A549 (cell line): ENCODE measurements at regions of chr9 and their contacts with region 1.

Region 1: GRCh38 chr9:34701769-34702736 is 7.9 kb downstream of the CCL21 start:
- DNase-seq: peak; percentile 78 to 90
- ATAC-seq: peak; percentile 90 to 93
- H3K4me3 ChIP-seq: peak overlapping the region; percentile 57
- H3K27ac ChIP-seq: peak overlapping the region; percentile 51 to 87
- H3K4me1 ChIP-seq: no peaks in the 10 kb centered on the region
- CTCF ChIP-seq: peak; percentile 96
- EP300 ChIP-seq: no peak
- POLR2A ChIP-seq: no peak
- RAD21 ChIP-seq: peak; percentile 72 to 73

Region 2: GRCh38 chr9:34318163-34318790 is 383.8 kb before region 1 on chr9:
- CTCF ChIA-PET with region 1: no interaction called
- POLR2A ChIA-PET with region 1: no interaction called
- DNase-seq: no peak
- ATAC-seq: no peak
- H3K4me3 ChIP-seq: no peak overlapping the region
- H3K27ac ChIP-seq: no peak overlapping the region
- H3K4me1 ChIP-seq: no peaks in the 10 kb centered on the region
- CTCF ChIP-seq: no peak
- EP300 ChIP-seq: no peak
- POLR2A ChIP-seq: no peak
- RAD21 ChIP-seq: no peak

Region 3: DNA sequence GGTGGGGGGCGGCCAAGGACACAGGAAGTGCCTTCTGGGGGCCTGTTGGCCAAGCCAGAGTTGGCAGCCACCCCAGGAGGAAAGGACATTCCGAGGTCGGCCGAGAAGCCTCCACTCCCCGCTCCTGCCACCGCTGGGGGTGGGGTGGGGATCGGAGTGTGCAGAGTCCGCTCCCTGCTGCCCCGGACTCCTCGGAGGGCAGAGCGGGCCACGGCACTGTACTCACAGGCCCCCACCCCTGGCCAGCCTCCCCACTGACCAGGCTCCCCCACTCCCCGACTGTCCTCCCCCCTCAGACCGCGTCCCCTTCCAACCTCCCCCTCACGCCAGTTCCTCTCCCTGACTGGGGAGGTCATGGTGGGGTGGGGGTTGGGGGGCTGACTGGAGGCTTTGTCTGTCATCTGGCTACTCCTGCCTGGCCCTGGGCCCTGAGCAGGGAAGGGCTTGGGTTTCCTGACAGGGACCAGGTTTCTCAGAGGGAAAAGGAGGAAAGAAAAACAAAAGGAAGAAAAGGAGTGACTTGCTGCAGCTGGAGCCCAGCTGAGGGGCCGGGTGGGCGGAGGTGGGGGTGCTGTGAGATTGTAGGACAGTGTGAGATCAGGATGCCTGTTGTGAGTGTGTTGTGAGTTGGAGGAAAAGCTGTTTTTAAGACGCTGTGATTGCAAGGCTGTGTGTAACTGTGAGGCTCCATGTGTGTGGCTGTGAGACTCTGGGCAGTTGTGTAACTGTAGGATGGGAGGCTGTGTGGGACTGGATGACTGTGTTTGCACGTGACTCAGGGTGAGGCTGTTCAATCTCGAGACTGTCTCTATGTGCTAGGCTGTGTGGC is 142.2 kb before region 1 on chr9:
- CTCF ChIA-PET with region 1: no interaction called
- POLR2A ChIA-PET with region 1: no interaction called
- DNase-seq: peak; percentile 27 to 50
- ATAC-seq: peak; percentile 63 to 80; a peak in 5 of 6 replicates
- H3K4me3 ChIP-seq: no peak overlapping the region
- H3K27ac ChIP-seq: peak overlapping the region; percentile 45 to 48; a peak in 4 of 6 replicates
- H3K4me1 ChIP-seq: peaks cover 11% of the 10 kb centered on the region
- CTCF ChIP-seq: no peak
- EP300 ChIP-seq: no peak
- POLR2A ChIP-seq: no peak
- RAD21 ChIP-seq: no peak

Region 4: DNA sequence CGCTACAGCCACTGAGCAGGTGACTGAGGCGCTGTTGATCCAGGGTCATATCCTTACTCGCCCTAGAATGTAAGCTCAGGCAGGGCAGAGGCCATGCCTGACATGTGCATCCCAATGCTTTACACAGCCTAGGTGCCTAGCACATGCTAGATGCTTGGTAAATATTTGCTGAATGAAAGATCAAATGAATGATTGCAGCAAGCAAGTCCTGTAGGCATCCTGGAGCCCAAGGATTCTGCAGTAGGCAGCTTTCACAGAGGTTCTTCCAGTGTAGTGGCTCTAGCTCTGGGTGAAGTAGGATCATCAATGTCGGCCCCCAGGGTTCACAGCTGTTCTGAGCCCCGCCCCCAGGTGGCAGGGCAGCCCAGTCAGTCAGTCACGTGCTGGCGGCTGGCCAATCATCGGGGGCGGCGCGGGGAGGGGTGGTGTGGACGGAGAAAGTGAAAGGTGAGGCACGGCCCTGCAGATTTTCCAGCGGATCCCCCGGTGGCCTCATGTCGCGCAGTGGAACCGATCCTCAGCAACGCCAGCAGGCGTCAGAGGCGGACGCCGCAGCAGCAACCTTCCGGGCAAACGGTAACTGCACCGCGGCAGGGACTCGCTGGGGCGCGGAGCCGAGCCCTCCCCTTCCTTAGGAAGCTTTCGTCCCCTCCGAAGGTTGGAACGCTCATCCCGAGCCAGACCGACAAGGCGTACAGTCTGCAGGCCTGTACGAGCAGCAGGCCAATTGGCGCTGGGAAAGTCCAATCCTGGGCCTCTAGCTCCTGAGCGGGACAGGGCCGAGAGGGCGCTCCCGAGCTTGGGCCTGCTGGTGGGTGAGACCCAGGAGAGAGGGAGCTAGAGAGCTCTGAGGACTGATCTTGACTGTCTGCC is 55.6 kb before region 1 on chr9 and contains the start of gene GALT:
- CTCF ChIA-PET with region 1: interaction called, 18 read pairs
- POLR2A ChIA-PET with region 1: no interaction called
- DNase-seq: peak; percentile 84 to 97
- ATAC-seq: peak; percentile 86 to 91
- H3K4me3 ChIP-seq: peak within 1 kb of the TSS; percentile 60
- H3K27ac ChIP-seq: peak within 1 kb of the TSS; percentile 80 to 94
- H3K4me1 ChIP-seq: peaks cover 32% of the 10 kb centered on the region
- CTCF ChIP-seq: peak; percentile 58
- EP300 ChIP-seq: no peak
- POLR2A ChIP-seq: peak; percentile 61
- RAD21 ChIP-seq: no peak
- polyA plus RNA-seq, gene GALT: 19.0 and 24.4 TPM in 2 replicates

Region 5: DNA sequence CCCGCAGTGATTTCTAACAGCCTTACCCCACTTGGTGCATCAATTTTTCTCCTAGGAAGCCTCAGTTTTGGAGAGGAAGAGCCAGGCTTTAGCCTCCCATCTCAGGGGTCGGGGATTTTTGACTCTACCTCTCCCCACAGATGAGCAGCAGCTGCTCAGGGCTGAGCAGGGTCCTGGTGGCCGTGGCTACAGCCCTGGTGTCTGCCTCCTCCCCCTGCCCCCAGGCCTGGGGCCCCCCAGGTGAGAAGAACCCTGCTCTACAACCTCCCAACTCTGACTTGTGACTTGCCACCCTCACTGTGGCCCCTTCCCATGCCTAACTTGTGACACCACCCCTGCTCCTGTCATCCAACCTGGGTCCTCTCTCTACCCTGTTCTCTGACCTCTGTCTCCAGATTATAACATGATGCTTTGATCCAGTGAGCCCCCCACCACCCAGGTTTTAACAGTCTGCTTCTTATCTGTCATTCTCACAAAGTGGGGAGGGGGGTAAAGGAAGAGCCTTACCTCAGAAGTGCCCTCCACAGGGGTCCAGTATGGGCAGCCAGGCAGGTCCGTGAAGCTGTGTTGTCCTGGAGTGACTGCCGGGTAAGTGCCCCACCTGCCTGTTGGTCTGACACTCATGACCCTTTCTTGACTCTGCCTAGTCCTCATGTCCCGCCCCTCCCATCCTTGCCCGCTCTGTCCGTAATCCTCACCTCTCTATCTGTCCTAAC is 46.8 kb before region 1 on chr9:
- CTCF ChIA-PET with region 1: interaction called, 48 read pairs
- POLR2A ChIA-PET with region 1: no interaction called
- DNase-seq: no peak
- ATAC-seq: no peak
- H3K4me3 ChIP-seq: no peak overlapping the region
- H3K27ac ChIP-seq: no peak overlapping the region
- H3K4me1 ChIP-seq: peaks cover 17% of the 10 kb centered on the region
- CTCF ChIP-seq: no peak
- EP300 ChIP-seq: no peak
- POLR2A ChIP-seq: no peak
- RAD21 ChIP-seq: no peak

Region 6: GRCh38 chr9:34665381-34666250 is 36.4 kb before region 1 on chr9:
- CTCF ChIA-PET with region 1: interaction called, 48 read pairs
- POLR2A ChIA-PET with region 1: interaction called, 3 read pairs
- DNase-seq: peak; percentile 95 to 99
- ATAC-seq: peak; percentile 79 to 86
- H3K4me3 ChIP-seq: peak overlapping the region; percentile 93
- H3K27ac ChIP-seq: peak overlapping the region; percentile 96 to 97
- H3K4me1 ChIP-seq: peaks cover 8% of the 10 kb centered on the region
- CTCF ChIP-seq: no peak
- EP300 ChIP-seq: no peak
- POLR2A ChIP-seq: peak; percentile 47
- RAD21 ChIP-seq: no peak

Region 7: GRCh38 chr9:34675048-34675714 is 26.9 kb before region 1 on chr9:
- CTCF ChIA-PET with region 1: interaction called, 65 read pairs
- POLR2A ChIA-PET with region 1: no interaction called
- DNase-seq: peak; percentile 79 to 84
- ATAC-seq: peak; percentile 93 to 99
- H3K4me3 ChIP-seq: no peak overlapping the region
- H3K27ac ChIP-seq: no peak overlapping the region
- H3K4me1 ChIP-seq: no peaks in the 10 kb centered on the region
- CTCF ChIP-seq: peak; percentile 79
- EP300 ChIP-seq: no peak
- POLR2A ChIP-seq: no peak
- RAD21 ChIP-seq: peak; percentile 70 to 88

Region 8: DNA sequence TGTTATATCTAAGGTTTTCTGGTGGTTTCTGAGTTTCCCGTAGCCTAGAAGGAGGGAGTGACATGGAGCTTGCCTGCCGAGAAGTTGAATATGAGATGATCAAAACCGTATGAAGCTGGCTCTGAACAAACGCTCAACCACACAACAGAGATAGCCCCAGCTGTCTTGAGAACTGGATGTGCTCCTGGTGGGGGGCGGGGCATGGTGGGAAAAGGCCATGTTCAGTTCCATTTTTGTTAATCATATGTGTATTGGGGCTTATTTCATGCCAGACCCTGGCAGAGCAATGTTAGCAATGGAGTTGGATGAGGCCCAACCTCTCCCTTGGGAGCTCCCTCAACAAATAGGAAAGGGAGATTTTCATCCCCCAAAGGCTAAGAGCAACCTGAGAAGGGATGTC is 15.8 kb before region 1 on chr9:
- CTCF ChIA-PET with region 1: interaction called, 135 read pairs
- POLR2A ChIA-PET with region 1: no interaction called
- DNase-seq: no peak
- ATAC-seq: no peak
- H3K4me3 ChIP-seq: no peak overlapping the region
- H3K27ac ChIP-seq: no peak overlapping the region
- H3K4me1 ChIP-seq: no peaks in the 10 kb centered on the region
- CTCF ChIP-seq: no peak
- EP300 ChIP-seq: no peak
- POLR2A ChIP-seq: no peak
- RAD21 ChIP-seq: no peak

Region 9: GRCh38 chr9:34717996-34718614 is 16.1 kb after region 1 on chr9:
- CTCF ChIA-PET with region 1: interaction called, 87 read pairs
- POLR2A ChIA-PET with region 1: no interaction called
- DNase-seq: no peak
- ATAC-seq: peak in 1 of 2 experiments; percentile 33; a peak in 1 of 6 replicates
- H3K4me3 ChIP-seq: no peak overlapping the region
- H3K27ac ChIP-seq: no peak overlapping the region
- H3K4me1 ChIP-seq: no peaks in the 10 kb centered on the region
- CTCF ChIP-seq: no peak
- EP300 ChIP-seq: no peak
- POLR2A ChIP-seq: no peak
- RAD21 ChIP-seq: no peak